A549 (cell line): ENCODE measurements at regions of chr10 and their contacts with region 1.

Region 1: DNA sequence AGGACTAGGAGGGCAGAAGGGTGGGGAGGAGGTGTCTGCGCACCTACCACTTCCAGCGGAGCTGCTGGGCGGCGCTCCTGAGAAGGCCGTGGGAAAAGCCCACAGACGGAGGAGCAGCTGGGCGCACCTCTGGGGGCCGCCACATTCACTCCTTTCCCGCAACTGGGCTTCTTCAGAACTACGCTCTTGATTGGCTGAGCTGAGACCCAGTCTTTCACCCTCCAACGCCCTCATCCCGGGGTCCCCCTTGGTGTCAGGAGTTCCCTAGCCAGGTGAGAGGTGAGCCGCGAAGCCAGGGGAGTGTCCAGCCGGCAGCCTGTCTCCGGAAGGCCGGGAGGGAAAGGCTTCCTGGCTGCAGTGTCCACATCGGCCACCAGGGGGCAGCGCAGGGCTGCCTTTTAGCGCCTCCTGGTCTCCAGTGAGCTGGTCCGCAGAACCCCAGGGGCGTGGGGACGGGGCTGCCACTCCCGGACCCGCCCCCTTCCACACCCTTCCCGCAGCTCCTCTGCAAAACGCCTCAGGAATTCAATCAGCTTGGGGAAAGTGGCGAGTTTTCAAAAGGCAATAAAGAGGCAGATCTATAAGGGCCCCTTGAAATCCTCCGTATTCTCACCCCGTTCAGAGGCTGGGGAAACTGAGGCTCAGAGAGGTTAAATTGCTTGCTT is 98.8 kb downstream of the CHST15 start:
- DNase-seq: peak; percentile 83 to 91
- ATAC-seq: peak; percentile 73 to 87
- H3K4me3 ChIP-seq: peak overlapping the region; percentile 57
- H3K27ac ChIP-seq: peak overlapping the region; percentile 68 to 87
- H3K4me1 ChIP-seq: peaks cover 27% of the 10 kb centered on the region
- CTCF ChIP-seq: peak; percentile 96
- EP300 ChIP-seq: no peak
- POLR2A ChIP-seq: no peak
- RAD21 ChIP-seq: peak; percentile 93 to 99

Region 2: GRCh38 chr10:123974406-123974805 is 20.1 kb before region 1 on chr10:
- CTCF ChIA-PET with region 1: interaction called, 23 read pairs
- POLR2A ChIA-PET with region 1: no interaction called
- DNase-seq: peak in 1 of 2 experiments; percentile 79
- ATAC-seq: peak; percentile 58 to 75; a peak in 4 of 6 replicates
- H3K4me3 ChIP-seq: no peak overlapping the region
- H3K27ac ChIP-seq: no peak overlapping the region
- H3K4me1 ChIP-seq: no peaks in the 10 kb centered on the region
- CTCF ChIP-seq: no peak
- EP300 ChIP-seq: no peak
- POLR2A ChIP-seq: no peak
- RAD21 ChIP-seq: no peak

Region 3: DNA sequence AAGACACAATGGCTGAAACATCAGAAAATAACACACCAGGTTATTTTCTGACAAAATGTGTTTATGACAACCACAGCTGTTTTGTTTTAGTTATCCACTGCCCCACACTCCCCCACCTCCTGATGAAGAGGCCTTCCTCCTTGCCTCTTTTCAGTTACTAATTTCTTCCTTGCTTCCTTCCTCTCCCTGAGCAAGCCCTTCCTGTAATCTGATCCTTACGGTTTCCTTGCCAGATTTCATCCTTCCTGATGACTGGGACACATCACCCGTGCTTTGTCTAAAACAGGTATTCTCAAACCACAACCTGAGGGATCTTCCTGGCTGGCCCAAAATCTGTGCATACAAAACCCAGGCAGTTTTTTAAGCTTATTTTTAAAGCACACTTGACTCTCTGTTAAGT is 59.4 kb after region 1 on chr10:
- CTCF ChIA-PET with region 1: interaction called, 12 read pairs
- POLR2A ChIA-PET with region 1: no interaction called
- DNase-seq: no peak
- ATAC-seq: no peak
- H3K4me3 ChIP-seq: no peak overlapping the region
- H3K27ac ChIP-seq: no peak overlapping the region
- H3K4me1 ChIP-seq: peaks cover 14% of the 10 kb centered on the region; the same call in 1 of the 3 replicates
- CTCF ChIP-seq: no peak
- EP300 ChIP-seq: no peak
- POLR2A ChIP-seq: no peak
- RAD21 ChIP-seq: no peak

Region 4: GRCh38 chr10:124099604-124100003 is 105.1 kb after region 1 on chr10:
- CTCF ChIA-PET with region 1: interaction called, 14 read pairs
- POLR2A ChIA-PET with region 1: no interaction called
- DNase-seq: no peak
- ATAC-seq: no peak
- H3K4me3 ChIP-seq: no peak overlapping the region
- H3K27ac ChIP-seq: no peak overlapping the region
- H3K4me1 ChIP-seq: 0 out of 3 replicates have a peak, but pooled peaks cover under 1% of the 10 kb centered on the region
- CTCF ChIP-seq: no peak
- EP300 ChIP-seq: no peak
- POLR2A ChIP-seq: no peak
- RAD21 ChIP-seq: no peak

Region 5: GRCh38 chr10:124152916-124153826 is 158.6 kb after region 1 on chr10:
- CTCF ChIA-PET with region 1: interaction called, 19 read pairs
- POLR2A ChIA-PET with region 1: interaction called, 21 read pairs
- DNase-seq: peak; percentile 89 to 97
- ATAC-seq: peak; percentile 83 to 90
- H3K4me3 ChIP-seq: peak overlapping the region; percentile 17; the same call in 2 of the 3 replicates
- H3K27ac ChIP-seq: peak overlapping the region; percentile 95 to 97
- H3K4me1 ChIP-seq: peaks cover 36% of the 10 kb centered on the region
- CTCF ChIP-seq: no peak
- EP300 ChIP-seq: peak in 1 of 2 experiments; percentile 54; a peak in 1 of 5 replicates
- POLR2A ChIP-seq: no peak; the same call in 1 of the 2 replicates
- RAD21 ChIP-seq: peak in 1 of 2 experiments; percentile 10; a peak in 1 of 5 replicates

Region 6: GRCh38 chr10:124372899-124373298 is 378.4 kb after region 1 on chr10:
- CTCF ChIA-PET with region 1: interaction called, 26 read pairs
- POLR2A ChIA-PET with region 1: no interaction called
- DNase-seq: no peak
- ATAC-seq: no peak
- H3K4me3 ChIP-seq: no peak overlapping the region
- H3K27ac ChIP-seq: no peak overlapping the region
- H3K4me1 ChIP-seq: no peaks in the 10 kb centered on the region
- CTCF ChIP-seq: no peak
- EP300 ChIP-seq: no peak
- POLR2A ChIP-seq: no peak
- RAD21 ChIP-seq: no peak

Region 7: GRCh38 chr10:124418726-124419501 is 424.4 kb after region 1 on chr10 and contains the start of gene OAT:
- CTCF ChIA-PET with region 1: interaction called, 25 read pairs
- POLR2A ChIA-PET with region 1: interaction called, 4 read pairs
- DNase-seq: peak; percentile 96 to 98
- ATAC-seq: peak; percentile 95 to 97
- H3K4me3 ChIP-seq: peak within 1 kb of the TSS; percentile 85
- H3K27ac ChIP-seq: peak within 1 kb of the TSS; percentile 76 to 93
- H3K4me1 ChIP-seq: peaks cover 21% of the 10 kb centered on the region
- CTCF ChIP-seq: no peak
- EP300 ChIP-seq: no peak
- POLR2A ChIP-seq: peak; percentile 98
- RAD21 ChIP-seq: no peak
- polyA plus RNA-seq, gene OAT: 82.6 and 97.6 TPM in 2 replicates